HCT116 (cell line): ENCODE measurements at regions of chr10 and their contacts with region 1.

Region 1: DNA sequence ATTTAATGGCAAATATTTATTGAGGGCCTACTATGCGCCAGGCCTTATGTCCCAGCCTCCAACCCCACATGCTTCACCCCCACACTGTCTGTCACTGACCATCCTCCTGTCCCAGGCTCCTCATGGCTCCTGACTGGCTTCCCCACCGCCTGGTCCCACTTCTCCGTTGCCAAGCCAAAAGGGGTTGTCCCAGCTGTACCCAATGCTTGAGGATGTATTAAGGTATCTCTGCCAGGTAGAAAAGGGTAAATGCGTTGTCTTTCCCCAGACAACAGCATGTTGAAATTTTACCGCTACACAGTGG is 168.8 kb upstream of the FRMD4A start:
- DNase-seq: no peak
- ATAC-seq: no peak
- H3K4me3 ChIP-seq: no peak overlapping the region
- H3K27ac ChIP-seq: no peak overlapping the region
- H3K4me1 ChIP-seq: no peaks in the 10 kb centered on the region
- H3K27me3 ChIP-seq: peaks cover 9% of the 10 kb centered on the region
- CTCF ChIP-seq: no peak
- POLR2A ChIP-seq: no peak
- RAD21 ChIP-seq: no peak

Region 2: GRCh38 chr10:14971867-14972448 is 472.4 kb after region 1 on chr10:
- CTCF ChIA-PET with region 1: no interaction called
- POLR2A ChIA-PET with region 1: no interaction called
- RAD21 ChIA-PET with region 1: no interaction called
- intact Hi-C with region 1: loop called (anchors 5 kb)
- DNase-seq: no peak
- ATAC-seq: peak; percentile 83
- H3K4me3 ChIP-seq: no peak overlapping the region
- H3K27ac ChIP-seq: no peak overlapping the region
- H3K4me1 ChIP-seq: no peaks in the 10 kb centered on the region
- H3K27me3 ChIP-seq: no peaks in the 10 kb centered on the region
- CTCF ChIP-seq: peak; percentile 35 to 59 (median 59); a peak in 4 of 6 replicates
- POLR2A ChIP-seq: no peak
- RAD21 ChIP-seq: peak; percentile 57